ENCODE measurements at regions of chr2 and their contacts with region 1.

Region 1: DNA sequence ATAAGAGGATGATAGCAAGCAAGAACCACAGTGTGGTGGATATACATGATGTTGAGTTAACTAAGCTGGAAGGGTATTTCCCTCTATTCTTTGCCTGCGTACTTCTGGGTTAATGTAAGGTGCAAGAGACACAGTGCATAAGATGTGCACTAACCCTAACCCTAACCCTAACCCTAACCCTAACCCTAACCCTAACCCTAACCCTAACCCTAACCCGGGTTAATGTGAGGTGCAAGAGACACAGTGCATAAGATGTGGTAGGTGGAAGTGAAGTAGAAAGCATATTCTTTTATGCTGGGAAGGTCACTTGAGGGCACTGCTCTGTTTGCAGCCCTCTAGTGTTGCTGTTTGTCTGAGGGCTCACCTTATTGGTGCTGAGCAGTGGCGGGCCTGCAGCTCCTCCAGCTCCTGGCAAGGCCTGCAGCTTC is 181.5 kb upstream of the ITGA4 start:
- DNase-seq: peak in 5 of 9 experiments; percentile 18 to 78 (median 59)
- ATAC-seq: peak; percentile 90
- H3K4me3 ChIP-seq: no peak overlapping the region
- H3K4me3 Mint-ChIP-seq: peak overlapping the region; percentile 35
- H3K27ac ChIP-seq: peak overlapping the region; percentile 17 to 68
- H3K27ac Mint-ChIP-seq: peak overlapping the region; percentile 79
- H3K4me1 ChIP-seq: peaks cover 31% of the 10 kb centered on the region
- H3K4me1 Mint-ChIP-seq: peaks cover 46% of the 10 kb centered on the region
- H3K27me3 ChIP-seq: no peaks in the 10 kb centered on the region
- H3K27me3 Mint-ChIP-seq: no peaks in the 10 kb centered on the region
- CTCF ChIP-seq: no peak

Region 2: DNA sequence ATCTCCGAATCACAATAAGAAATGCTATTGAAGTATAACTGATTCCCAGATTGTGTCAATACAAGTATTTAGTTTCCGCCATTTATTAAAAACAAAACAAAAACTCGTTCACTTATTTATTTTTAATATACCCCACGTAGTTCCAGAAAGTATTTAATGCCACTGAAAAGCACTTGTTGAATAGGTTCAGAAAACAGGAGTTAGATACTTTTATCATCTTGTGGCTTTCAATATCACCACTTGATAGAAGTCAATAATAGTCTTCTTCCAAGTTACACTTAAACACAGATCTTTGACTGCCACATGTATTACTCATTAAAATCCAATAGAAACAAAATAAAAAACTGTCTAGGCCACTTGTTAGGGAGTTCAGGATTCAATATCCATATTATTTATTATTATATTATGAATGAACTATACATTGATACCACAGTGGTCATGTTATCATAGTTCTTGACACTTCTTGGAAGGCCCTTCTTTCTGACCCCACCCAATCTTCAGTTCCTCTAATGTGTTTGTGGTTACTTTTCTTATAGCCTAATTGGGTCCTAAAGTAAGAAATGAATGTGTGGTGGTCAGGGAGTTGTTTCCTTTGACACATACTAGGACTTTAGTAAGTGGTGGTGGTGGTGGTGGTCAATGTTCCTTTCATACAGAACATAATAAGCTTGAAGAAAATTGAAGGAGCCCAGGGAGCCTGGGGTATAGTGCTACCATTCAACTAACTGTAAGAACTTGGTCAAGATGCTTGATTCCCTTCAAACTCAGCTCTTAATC is 39.8 kb before region 1 on chr2:
- CTCF ChIA-PET with region 1: no interaction called
- POLR2A ChIA-PET with region 1: no interaction called
- intact Hi-C with region 1: loop called in 1 of 2 experiments (anchors 5 kb)
- DNase-seq: no peak
- ATAC-seq: no peak
- H3K4me3 ChIP-seq: no peak overlapping the region
- H3K4me3 Mint-ChIP-seq: no peak overlapping the region
- H3K27ac ChIP-seq: no peak overlapping the region
- H3K27ac Mint-ChIP-seq: no peak overlapping the region
- H3K4me1 ChIP-seq: peaks cover 1% of the 10 kb centered on the region
- H3K4me1 Mint-ChIP-seq: peaks cover 36% of the 10 kb centered on the region
- H3K27me3 ChIP-seq: no peaks in the 10 kb centered on the region
- H3K27me3 Mint-ChIP-seq: no peaks in the 10 kb centered on the region
- CTCF ChIP-seq: no peak

Region 3: DNA sequence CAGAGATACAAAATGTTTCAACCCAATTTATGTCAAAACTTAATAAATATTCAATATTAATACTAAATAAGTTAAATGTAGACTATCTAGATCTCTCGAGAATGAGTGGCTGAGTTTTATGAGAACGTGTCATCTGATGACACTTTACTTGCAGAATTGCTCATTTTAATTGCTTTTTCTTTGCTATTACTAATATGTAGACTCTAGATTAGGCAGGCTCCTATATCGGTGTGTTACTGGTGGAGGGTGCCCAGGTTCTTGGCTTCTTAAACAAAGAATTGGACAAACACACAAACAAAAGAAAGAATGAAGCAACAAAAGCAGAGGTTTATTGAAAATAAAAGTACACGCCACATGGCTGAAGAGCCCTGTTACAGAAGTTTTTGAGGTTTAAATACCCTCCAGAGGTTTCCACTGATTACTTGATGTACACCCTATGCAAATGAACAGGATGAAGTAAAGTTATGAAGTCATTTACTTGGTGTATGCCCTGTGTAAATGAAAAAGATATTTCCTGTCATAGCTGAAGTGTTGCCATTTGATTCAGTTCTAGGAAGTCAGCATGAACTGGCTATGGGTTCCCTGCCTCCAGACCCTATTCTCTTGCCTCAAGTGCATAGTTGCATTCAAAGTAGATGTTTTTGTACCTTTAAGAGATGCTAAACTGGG is 58.6 kb after region 1 on chr2:
- CTCF ChIA-PET with region 1: no interaction called
- POLR2A ChIA-PET with region 1: no interaction called
- intact Hi-C with region 1: loop called in 1 of 2 experiments (anchors 5 kb)
- DNase-seq: no peak
- ATAC-seq: no peak
- H3K4me3 ChIP-seq: no peak overlapping the region
- H3K4me3 Mint-ChIP-seq: no peak overlapping the region
- H3K27ac ChIP-seq: no peak overlapping the region
- H3K27ac Mint-ChIP-seq: peak overlapping the region; percentile 50
- H3K4me1 ChIP-seq: no peaks in the 10 kb centered on the region
- H3K4me1 Mint-ChIP-seq: peaks cover 9% of the 10 kb centered on the region
- H3K27me3 ChIP-seq: no peaks in the 10 kb centered on the region
- H3K27me3 Mint-ChIP-seq: no peaks in the 10 kb centered on the region
- CTCF ChIP-seq: no peak

Measured in CD8-positive, alpha-beta T cell (primary cell).